Body of pancreas (tissue), 4 donors: ENCODE measurements at regions of chr14 and their contacts with region 1.

Region 1: DNA sequence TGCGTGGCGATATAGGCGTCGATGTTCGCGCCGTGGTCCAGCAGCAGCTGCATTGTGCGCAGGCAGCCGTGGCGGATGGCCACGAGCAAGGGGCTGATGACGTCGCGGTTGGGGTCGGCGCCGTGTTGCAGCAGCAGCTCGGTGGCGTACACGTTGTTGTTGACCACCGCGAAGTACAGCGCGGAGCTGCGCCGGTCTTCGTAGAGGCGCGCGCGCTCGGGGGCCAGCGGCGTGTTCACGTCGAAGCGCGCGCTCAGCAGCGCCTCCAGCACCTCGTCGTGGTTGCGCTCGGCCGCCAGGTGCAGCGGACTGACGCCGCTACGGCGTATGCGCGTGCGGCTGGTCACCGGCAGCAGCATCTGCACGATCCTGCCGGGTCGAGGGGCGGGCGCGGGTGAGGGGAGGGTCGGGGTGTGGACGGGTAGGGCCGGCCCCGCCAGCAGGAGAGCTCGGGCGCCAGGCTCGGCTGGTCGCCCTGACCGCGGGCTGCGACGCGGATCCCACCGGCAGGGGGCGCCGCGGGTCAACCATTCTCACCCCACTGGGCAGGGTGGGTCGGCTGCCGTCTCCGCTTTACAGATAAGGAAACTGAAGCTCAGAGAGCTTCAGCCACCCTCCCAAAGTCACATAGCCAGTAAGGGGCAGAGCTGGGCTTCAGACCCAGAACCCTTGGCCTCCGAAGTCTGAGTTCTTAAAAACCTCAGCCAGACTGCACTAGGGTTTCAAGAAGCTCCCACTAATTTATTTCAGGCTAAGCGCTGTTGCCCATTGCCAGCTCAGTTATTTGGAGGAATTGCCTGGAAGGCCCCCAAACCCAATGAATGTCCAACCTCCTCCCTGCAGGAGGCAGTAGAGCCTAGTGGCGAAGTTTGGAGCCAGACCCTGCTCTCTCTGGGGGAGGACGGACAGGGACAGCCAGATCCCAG is 12.4 kb downstream of the FAM181A start:
- DNase-seq: peak; percentile 83 to 88 (median 84)
- ATAC-seq: peak; percentile 64
- H3K4me3 ChIP-seq: no peak overlapping the region
- H3K27ac ChIP-seq: peak overlapping the region in 3 of 4 donors; percentile 95 to 98 (median 97)
- H3K4me1 ChIP-seq: peaks cover 46% of the 10 kb centered on the region
- H3K27me3 ChIP-seq: no peaks in the 10 kb centered on the region
- CTCF ChIP-seq: peak; percentile 74 to 95 (median 90)
- POLR2A ChIP-seq: no peak

Region 2: GRCh38 chr14:93880021-93880820 is 59.3 kb before region 1 on chr14:
- intact Hi-C with region 1: no loop called
- DNase-seq: peak in 2 of 4 donors; percentile 22 to 23
- ATAC-seq: peak; percentile 53
- H3K4me3 ChIP-seq: no peak overlapping the region
- H3K27ac ChIP-seq: no peak overlapping the region
- H3K4me1 ChIP-seq: peaks cover 9% of the 10 kb centered on the region
- H3K27me3 ChIP-seq: no peaks in the 10 kb centered on the region
- CTCF ChIP-seq: no peak
- POLR2A ChIP-seq: no peak

Region 3: DNA sequence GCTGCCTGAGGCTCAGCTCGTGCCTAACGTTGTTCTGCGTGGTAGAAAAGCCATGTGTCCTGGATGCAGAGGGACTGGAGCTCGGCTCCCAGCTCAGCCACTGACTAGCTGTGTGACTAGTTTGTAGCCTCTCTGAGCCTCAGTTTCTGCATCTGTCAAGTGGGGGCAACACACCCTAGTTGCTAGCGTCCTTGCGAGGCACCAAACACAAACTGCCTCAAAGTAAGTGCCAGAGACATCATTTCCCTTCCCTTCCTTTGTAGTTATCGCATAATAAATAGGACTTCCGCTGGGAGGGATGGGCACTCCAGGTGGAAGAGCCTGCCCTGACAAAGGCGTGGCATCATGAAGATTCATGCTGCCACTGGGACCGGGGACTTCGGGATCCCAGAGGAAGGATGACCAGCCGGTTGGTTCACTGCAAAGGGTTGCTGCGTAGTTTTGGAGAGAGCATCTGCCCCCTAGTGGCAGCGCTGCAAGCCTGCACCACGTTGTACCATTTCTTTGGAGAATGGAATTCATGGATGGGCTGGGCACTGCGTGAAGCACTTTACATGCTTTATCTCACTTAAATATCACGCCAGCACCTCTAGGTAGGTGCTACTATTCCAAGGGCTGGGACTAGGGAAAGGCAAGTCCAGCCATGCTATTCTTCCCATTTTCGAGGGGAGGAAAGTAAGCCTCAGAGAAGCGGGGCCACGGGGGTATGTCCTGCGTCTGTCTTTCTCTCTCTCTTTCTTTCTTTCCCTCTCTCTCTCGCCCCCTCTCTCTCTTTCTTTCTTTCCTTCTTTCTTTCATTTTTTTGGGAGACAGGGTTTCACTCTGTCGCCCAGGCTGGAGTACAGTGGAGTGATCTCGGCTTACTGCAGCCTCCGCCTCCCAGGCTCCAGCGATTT is 62.2 kb after region 1 on chr14:
- intact Hi-C with region 1: loop called (anchors 5 kb)
- DNase-seq: peak; percentile 58 to 65 (median 64)
- ATAC-seq: peak; percentile 83
- H3K4me3 ChIP-seq: no peak overlapping the region
- H3K27ac ChIP-seq: no peak overlapping the region
- H3K4me1 ChIP-seq: no peaks in the 10 kb centered on the region
- H3K27me3 ChIP-seq: no peaks in the 10 kb centered on the region
- CTCF ChIP-seq: peak; percentile 89 to 99 (median 92)
- POLR2A ChIP-seq: no peak